Endothelial cell of umbilical vein (primary cell): ENCODE measurements at regions of chr2 and their contacts with region 1.

Region 1: GRCh38 chr2:237092920-237093781 is 7.5 kb downstream of the COPS8 start:
- DNase-seq: peak; percentile 84
- H3K4me3 ChIP-seq: peak overlapping the region in 1 of 3 experiments; percentile 8
- H3K27ac ChIP-seq: peak overlapping the region; percentile 56
- H3K4me1 ChIP-seq: peaks cover 67% of the 10 kb centered on the region
- H3K27me3 ChIP-seq: no peaks in the 10 kb centered on the region
- CTCF ChIP-seq: peak; percentile 50 to 65
- POLR2A ChIP-seq: no peak

Region 2: DNA sequence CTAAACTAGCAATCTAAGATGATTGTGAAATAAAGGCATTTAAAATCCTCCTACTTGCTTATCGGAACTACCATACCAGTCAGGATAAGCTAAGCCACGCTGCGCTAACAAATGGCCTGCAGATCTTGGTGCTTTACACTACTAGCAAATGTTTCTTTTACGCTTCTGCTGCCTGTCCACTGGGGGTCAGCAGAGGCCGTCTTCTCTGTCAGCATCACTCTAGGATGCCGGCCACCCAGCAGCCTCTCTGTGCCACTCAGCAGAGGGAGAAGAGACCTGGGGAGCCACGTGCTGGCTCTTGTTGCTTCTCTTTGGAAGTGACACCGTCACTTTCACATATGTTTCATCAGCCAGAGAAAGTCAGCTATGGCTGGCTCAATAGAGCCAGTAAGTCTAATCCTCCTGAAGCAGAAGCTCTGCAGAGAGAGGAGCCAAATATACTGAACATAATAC is 29.1 kb after region 1 on chr2:
- CTCF ChIA-PET with region 1: interaction called, 15 read pairs
- POLR2A ChIA-PET with region 1: no interaction called
- dilution Hi-C with region 1: no loop called
- intact Hi-C with region 1: no loop called
- DNase-seq: peak; percentile 64
- H3K4me3 ChIP-seq: no peak overlapping the region
- H3K27ac ChIP-seq: no peak overlapping the region
- H3K4me1 ChIP-seq: peaks cover 3% of the 10 kb centered on the region
- H3K27me3 ChIP-seq: no peaks in the 10 kb centered on the region
- CTCF ChIP-seq: peak; percentile 64 to 73
- POLR2A ChIP-seq: no peak

Region 3: DNA sequence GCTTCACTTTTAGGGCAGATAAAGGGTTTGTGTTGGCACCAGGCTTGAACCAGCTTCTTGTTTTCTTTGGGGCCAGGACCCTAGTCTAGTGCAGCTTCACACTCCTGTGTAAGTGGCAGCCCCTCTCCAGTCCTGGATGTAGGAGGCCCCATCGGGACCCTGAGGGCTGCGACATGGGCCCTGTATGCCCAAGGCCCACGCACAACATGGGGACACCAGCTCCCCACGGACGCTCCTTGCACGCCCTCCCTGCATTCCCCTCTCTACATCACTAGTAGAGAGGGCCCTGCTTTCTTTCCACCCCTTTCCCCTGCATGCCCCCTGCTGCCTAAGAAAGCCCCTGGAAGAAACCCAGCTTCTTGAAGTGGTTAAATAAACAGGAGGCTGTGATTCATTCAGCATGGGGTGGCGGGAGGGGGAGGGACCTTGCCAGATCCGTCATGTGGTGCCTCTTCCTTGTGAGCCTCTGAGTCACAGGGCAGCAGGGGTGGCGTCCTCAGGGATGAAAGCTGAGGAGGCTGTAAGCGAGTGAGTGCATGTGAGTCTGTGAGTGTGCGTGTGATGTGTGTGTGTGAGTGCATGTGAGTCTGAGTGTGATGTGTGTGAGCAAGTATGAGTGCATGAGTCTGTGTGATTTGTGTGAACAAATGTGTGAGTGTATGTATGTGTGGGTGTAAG is 35.0 kb after region 1 on chr2:
- CTCF ChIA-PET with region 1: interaction called, 15 read pairs
- POLR2A ChIA-PET with region 1: no interaction called
- dilution Hi-C with region 1: no loop called
- intact Hi-C with region 1: loop called (anchors 1 kb)
- DNase-seq: peak; percentile 98
- H3K4me3 ChIP-seq: no peak overlapping the region
- H3K27ac ChIP-seq: peak overlapping the region; percentile 21
- H3K4me1 ChIP-seq: peaks cover 11% of the 10 kb centered on the region
- H3K27me3 ChIP-seq: no peaks in the 10 kb centered on the region
- CTCF ChIP-seq: peak; percentile 6 to 17
- POLR2A ChIP-seq: no peak

Region 4: GRCh38 chr2:237154082-237154638 is 61.0 kb after region 1 on chr2:
- CTCF ChIA-PET with region 1: interaction called, 13 read pairs
- POLR2A ChIA-PET with region 1: no interaction called
- dilution Hi-C with region 1: no loop called
- intact Hi-C with region 1: loop called (anchors 1 kb)
- DNase-seq: peak; percentile 59
- H3K4me3 ChIP-seq: no peak overlapping the region
- H3K27ac ChIP-seq: no peak overlapping the region
- H3K4me1 ChIP-seq: peaks cover 8% of the 10 kb centered on the region
- H3K27me3 ChIP-seq: no peaks in the 10 kb centered on the region
- CTCF ChIP-seq: peak; percentile 73 to 75
- POLR2A ChIP-seq: no peak

Region 5: DNA sequence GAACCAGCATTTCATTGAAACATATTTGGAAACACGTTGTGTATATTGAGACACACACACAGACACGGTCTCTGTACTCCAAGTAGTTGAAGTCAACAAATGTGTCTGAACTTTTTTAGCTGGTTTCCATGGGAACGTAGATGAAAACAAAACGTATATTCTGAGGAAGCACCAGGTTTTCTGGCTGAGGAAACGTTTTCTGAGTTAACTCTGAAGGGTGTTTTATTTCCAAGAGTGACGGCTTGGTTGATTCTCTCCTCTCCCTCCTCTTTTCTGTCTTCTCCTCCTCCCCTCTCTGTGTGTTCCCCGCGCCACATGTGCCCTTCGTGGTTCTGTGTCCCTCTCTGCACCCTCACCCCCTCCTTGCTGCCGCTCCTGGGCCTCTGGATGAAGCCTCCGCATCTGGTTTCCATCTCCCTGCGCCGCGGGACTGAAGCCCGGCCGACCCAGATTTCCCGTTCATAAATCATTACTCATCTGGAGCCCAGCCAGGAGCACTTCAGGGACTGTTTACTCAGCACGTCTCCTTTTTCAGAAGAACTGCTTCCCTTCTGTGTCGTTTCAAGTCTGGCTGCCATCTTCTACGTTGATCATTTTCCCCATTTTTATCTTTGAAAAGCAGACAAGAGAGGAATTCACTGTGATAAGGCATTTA is 198.1 kb after region 1 on chr2:
- CTCF ChIA-PET with region 1: no interaction called
- POLR2A ChIA-PET with region 1: no interaction called
- dilution Hi-C with region 1: no loop called
- intact Hi-C with region 1: loop called (anchors 1 kb)
- DNase-seq: peak; percentile 99
- H3K4me3 ChIP-seq: peak overlapping the region in 2 of 3 experiments; percentile 15 to 36
- H3K27ac ChIP-seq: peak overlapping the region; percentile 95
- H3K4me1 ChIP-seq: peaks cover 35% of the 10 kb centered on the region
- H3K27me3 ChIP-seq: no peaks in the 10 kb centered on the region
- CTCF ChIP-seq: no peak
- POLR2A ChIP-seq: no peak

Region 6: GRCh38 chr2:237413777-237414661 is 320.9 kb after region 1 on chr2 and contains the start of gene COL6A3:
- CTCF ChIA-PET with region 1: interaction called, 19 read pairs
- POLR2A ChIA-PET with region 1: no interaction called
- dilution Hi-C with region 1: no loop called
- intact Hi-C with region 1: loop called (anchors 1 kb)
- DNase-seq: no peak
- H3K4me3 ChIP-seq: no peak within 1 kb of the TSS
- H3K27ac ChIP-seq: no peak within 1 kb of the TSS
- H3K4me1 ChIP-seq: no peaks in the 10 kb centered on the region
- H3K27me3 ChIP-seq: peaks cover 7 to 15% of the 10 kb centered on the region in 2 experiments
- CTCF ChIP-seq: no peak
- POLR2A ChIP-seq: no peak
- total RNA-seq, gene COL6A3: not detected in 2 replicates

Region 7: GRCh38 chr2:237474931-237475703 is 382.0 kb after region 1 on chr2:
- CTCF ChIA-PET with region 1: interaction called, 11 read pairs
- POLR2A ChIA-PET with region 1: no interaction called
- dilution Hi-C with region 1: no loop called
- intact Hi-C with region 1: loop called (anchors 1 kb)
- DNase-seq: peak; percentile 54
- H3K4me3 ChIP-seq: peak overlapping the region; percentile 38 to 51 (median 40)
- H3K27ac ChIP-seq: peak overlapping the region; percentile 23
- H3K4me1 ChIP-seq: peaks cover 12% of the 10 kb centered on the region
- H3K27me3 ChIP-seq: peaks cover 36 to 42% of the 10 kb centered on the region in 2 experiments
- CTCF ChIP-seq: peak; percentile 73 to 93
- POLR2A ChIP-seq: peak; percentile 23